Activated CD4-positive, alpha-beta T cell treated with anti-CD3 and anti-CD28 coated beads for 36 hours (primary cell): ENCODE measurements at regions of chr22 and their contacts with region 1.

Region 1: GRCh38 chr22:29449296-29449875 is 11.0 kb downstream of the RFPL1 start:
- DNase-seq: no peak
- ATAC-seq: no peak
- H3K4me3 Mint-ChIP-seq: no peak overlapping the region
- H3K27ac Mint-ChIP-seq: no peak overlapping the region
- H3K4me1 Mint-ChIP-seq: no peaks in the 10 kb centered on the region
- H3K27me3 Mint-ChIP-seq: no peaks in the 10 kb centered on the region

Region 2: GRCh38 chr22:29427176-29427760 is 22.1 kb before region 1 on chr22:
- CTCF ChIA-PET with region 1: interaction called, 3 read pairs
- POLR2A ChIA-PET with region 1: no interaction called
- intact Hi-C with region 1: loop called in 1 of 2 experiments (anchors 2 kb)
- DNase-seq: no peak
- ATAC-seq: no peak
- H3K4me3 Mint-ChIP-seq: no peak overlapping the region
- H3K27ac Mint-ChIP-seq: no peak overlapping the region
- H3K4me1 Mint-ChIP-seq: no peaks in the 10 kb centered on the region
- H3K27me3 Mint-ChIP-seq: peaks cover 4% of the 10 kb centered on the region

Region 3: DNA sequence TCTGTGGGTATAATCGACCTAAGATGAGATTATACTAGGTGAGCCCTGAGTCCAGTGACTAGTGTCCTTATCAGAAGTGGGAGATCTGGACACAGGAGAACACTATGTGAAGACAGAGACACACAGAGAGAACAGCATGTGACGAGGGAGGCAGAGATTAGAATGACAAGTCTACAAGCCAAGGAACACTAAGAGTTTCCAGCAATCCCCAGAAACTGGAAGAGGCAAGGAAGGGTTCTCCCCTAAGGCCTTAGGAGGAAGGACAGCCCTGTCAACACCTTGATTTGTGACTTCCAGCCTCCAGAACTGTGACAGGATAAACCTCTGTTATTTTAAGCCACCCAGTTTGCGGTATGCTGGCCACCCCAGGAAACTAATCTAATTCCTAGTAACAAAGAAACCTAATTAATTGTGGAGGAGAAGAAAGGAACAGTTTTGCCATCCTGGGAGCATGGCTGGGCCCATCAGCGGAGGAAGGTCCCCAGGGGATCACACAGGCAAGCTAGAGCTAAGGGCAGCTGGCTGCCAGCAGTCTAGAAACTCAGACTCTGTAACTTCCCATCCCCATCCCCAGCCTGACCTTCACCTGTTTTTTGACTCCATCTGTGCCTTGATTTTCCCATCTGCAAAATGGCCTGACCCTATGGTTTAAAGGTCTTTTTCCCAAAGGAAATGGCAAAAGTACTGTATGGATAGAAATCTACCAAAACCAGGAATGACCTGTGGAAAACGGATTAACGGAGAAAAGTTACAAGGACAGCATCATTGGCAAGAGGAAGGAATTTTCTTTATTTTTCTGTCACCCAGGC is 114.5 kb after region 1 on chr22:
- CTCF ChIA-PET with region 1: no interaction called
- POLR2A ChIA-PET with region 1: no interaction called
- intact Hi-C with region 1: no loop called
- DNase-seq: no peak
- ATAC-seq: no peak
- H3K4me3 Mint-ChIP-seq: no peak overlapping the region
- H3K27ac Mint-ChIP-seq: no peak overlapping the region
- H3K4me1 Mint-ChIP-seq: no peaks in the 10 kb centered on the region
- H3K27me3 Mint-ChIP-seq: no peaks in the 10 kb centered on the region